ENCODE measurements at regions of chr17 and their contacts with region 1.

Region 1: DNA sequence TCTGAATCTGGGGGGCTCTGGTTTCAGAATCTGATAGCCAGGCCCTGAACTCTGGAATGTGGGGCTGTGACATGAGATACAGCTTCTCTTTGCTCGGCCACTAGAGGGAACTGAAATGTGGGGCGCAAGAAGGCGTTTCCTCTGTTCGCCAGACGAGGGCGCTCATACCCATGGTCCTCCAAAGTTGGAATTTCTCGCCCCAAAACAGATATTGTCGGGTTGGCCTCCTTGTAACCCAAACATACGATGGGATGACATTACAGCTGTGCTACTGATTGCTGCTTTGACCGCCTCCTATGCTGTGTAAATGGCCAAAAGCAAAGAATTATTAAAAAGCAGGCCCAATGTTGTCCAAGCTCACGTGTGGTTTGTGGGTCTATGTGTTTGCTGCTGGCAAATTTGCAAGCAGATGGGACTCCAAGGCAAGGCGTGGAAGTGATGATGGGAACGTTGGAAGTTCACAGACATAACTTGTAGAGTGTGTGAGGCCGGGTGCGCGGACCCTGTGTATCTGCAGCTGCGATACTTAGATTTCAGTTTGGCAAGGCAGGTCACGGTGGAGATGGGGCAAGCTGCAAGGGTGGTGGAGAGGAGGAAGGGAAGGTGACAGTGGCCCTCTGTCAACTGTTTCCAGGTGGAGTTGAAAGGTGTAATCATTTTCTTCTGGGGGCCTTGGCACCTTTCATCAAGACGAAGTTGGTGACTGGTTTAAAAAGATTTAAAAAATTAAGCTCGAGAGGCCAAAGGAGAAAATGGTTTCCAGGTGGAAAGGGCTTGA is 13.0 kb upstream of the MSI2 start:
- H3K4me3 Mint-ChIP-seq: no peak overlapping the region
- H3K27ac Mint-ChIP-seq: no peak overlapping the region
- H3K4me1 Mint-ChIP-seq: no peaks in the 10 kb centered on the region
- H3K27me3 Mint-ChIP-seq: peaks cover 4% of the 10 kb centered on the region

Region 2: DNA sequence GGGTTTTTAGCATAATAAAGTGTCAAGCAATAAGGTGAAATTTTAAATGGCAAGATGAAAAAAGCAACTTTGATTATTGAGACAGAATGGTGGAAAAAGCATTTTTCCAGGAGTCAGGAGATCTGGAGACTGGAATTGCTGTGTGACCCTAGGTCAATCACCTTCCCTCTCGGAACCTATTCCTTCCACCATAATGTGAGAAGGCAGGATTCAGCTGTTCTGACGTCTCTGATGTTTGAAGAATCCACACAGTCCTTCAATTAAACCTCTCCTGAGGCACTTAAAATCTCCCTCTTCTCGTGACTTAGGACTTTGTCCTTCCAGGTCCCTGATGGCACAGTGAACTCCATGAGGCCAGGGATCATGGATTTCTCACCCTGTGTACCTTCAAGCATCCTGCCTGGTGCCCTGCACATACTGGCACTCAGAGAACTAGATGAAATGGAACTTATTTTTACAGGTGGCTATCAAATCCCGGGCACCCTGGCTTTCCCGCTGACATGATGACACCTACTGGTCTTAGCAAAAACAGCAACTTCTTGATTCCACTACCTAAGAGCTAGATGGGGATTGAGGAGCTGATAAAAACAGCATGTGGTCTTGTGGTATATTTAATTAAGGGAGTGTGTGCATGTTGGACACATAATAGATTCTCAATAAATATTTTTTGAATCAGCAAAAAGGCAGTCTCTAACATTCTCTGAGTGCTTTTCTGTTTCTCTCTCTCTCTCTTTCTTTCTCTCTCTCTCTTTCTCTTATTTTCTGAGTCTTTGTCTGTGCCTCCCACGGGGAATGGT is 504.1 kb after region 1 on chr17:
- intact Hi-C with region 1: loop called (anchors 2 kb)
- H3K4me3 Mint-ChIP-seq: no peak overlapping the region
- H3K27ac Mint-ChIP-seq: no peak overlapping the region
- H3K4me1 Mint-ChIP-seq: peaks cover 49% of the 10 kb centered on the region
- H3K27me3 Mint-ChIP-seq: peaks cover 4% of the 10 kb centered on the region

Measured in dendritic cell treated with granulocyte-macrophage colony-stimulating factor and Interleukin-4, amounts not matched to agents 40 ng/mL and 50 ng/mL, for 4 days (primary cell).